ENCODE measurements at regions of chr2 and their contacts with region 1.

Region 1: DNA sequence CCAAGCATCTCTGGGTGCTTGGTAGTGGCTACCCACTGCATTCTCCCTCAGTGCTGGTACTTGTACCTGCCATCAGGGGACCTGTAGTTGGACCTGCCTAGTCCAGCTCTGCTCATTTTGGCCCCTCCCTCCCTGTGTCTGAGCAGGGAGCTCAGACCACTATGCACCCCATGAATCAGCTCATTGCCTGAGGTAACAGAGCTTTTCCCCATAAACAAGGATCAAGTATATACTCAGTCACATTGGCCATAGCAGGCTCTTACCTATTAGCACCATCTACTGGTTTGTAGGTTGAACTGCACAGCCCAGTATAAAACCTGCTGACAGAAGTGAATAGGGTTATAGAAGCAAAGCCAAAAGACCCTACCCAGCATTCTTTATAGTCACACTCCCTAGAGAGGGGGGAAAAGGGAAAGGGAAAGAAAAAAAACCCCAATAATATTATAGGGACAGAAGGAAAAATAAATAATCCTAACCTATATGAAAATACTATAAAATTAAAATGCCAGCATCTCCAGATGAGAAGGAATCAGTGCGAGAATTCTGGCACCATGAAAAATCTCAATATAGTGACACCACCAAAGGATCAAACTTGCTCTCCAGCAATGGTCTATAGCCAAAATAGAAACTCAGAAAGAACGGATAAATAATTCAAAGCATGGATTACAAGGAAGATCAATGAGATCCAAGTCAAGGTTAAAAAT is 6.9 kb upstream of the FLACC1 start:
- DNase-seq: no peak

Region 2: GRCh38 chr2:201237486-201238123 is 126.4 kb before region 1 on chr2:
- intact Hi-C with region 1: loop called (anchors 2 kb)
- DNase-seq: no peak

Region 3: GRCh38 chr2:201432038-201432620 is 68.1 kb after region 1 on chr2:
- intact Hi-C with region 1: no loop called
- DNase-seq: no peak

Measured in posterior cingulate gyrus (tissue), 11 donors.